Posterior cingulate gyrus (tissue), 11 donors: ENCODE measurements at regions of chr19 and their contacts with region 1.

Region 1: GRCh38 chr19:48784540-48784939 is 26.3 kb downstream of the BCAT2 start:
- DNase-seq: peak in 1 of 10 donors; percentile 21

Region 2: GRCh38 chr19:48842789-48843162 is 58.2 kb after region 1 on chr19:
- intact Hi-C with region 1: loop called (anchors 1 kb)
- DNase-seq: peak in 4 of 10 donors; percentile 34 to 50 (median 42)

Region 3: GRCh38 chr19:49009828-49010227 is 225.3 kb after region 1 on chr19:
- intact Hi-C with region 1: no loop called
- DNase-seq: no peak